ENCODE measurements at regions of chr17 and their contacts with region 1.

Region 1: GRCh38 chr17:40113110-40113906 is 8.5 kb upstream of the MSL1 start:
- DNase-seq: peak; percentile 91 to 92 (median 91)
- H3K4me3 ChIP-seq: peak overlapping the region; percentile 30 to 73 (median 38)
- H3K4me3 Mint-ChIP-seq: peak overlapping the region; percentile 78 to 96
- H3K27ac ChIP-seq: no peak overlapping the region
- H3K27ac Mint-ChIP-seq: peak overlapping the region; percentile 53 to 86 (median 65)
- H3K4me1 ChIP-seq: peaks cover 40 to 52% of the 10 kb centered on the region in 2 donors
- H3K4me1 Mint-ChIP-seq: peaks cover 59% of the 10 kb centered on the region
- H3K27me3 ChIP-seq: no peaks in the 10 kb centered on the region
- H3K27me3 Mint-ChIP-seq: peaks cover 0 to 2% (median 0%) of the 10 kb centered on the region in 3 donors
- CTCF ChIP-seq: peak; percentile 86

Region 2: GRCh38 chr17:40062329-40063186 is 50.8 kb before region 1 on chr17 and contains the start of gene THRA:
- intact Hi-C with region 1: loop called (anchors 2 to 5 kb)
- DNase-seq: peak in 2 of 3 donors; percentile 54
- H3K4me3 ChIP-seq: peak within 1 kb of the TSS; percentile 76 to 94 (median 93)
- H3K4me3 Mint-ChIP-seq: peak within 1 kb of the TSS; percentile 84 to 90
- H3K27ac ChIP-seq: peak within 1 kb of the TSS; percentile 69 to 84
- H3K27ac Mint-ChIP-seq: peak within 1 kb of the TSS; percentile 77 to 92 (median 88)
- H3K4me1 ChIP-seq: peaks cover 26 to 45% of the 10 kb centered on the region in 2 donors
- H3K4me1 Mint-ChIP-seq: peaks cover 49% of the 10 kb centered on the region
- H3K27me3 ChIP-seq: peaks cover 0 to 4% of the 10 kb centered on the region in 2 donors
- H3K27me3 Mint-ChIP-seq: peaks cover 8 to 10% (median 9%) of the 10 kb centered on the region in 3 donors
- CTCF ChIP-seq: peak; percentile 11
- polyA plus RNA-seq, gene THRA: 2.5 to 7.5 (median 3.8) TPM

Region 3: GRCh38 chr17:40098846-40099618 is 14.3 kb before region 1 on chr17:
- intact Hi-C with region 1: loop called in 1 of 2 experiments (anchors 1 kb)
- DNase-seq: peak; percentile 99 to 100 (median 100)
- H3K4me3 ChIP-seq: peak overlapping the region; percentile 35 to 78 (median 36)
- H3K4me3 Mint-ChIP-seq: peak overlapping the region; percentile 87 to 95
- H3K27ac ChIP-seq: peak overlapping the region; percentile 78 to 98
- H3K27ac Mint-ChIP-seq: peak overlapping the region; percentile 96 to 99 (median 98)
- H3K4me1 ChIP-seq: peaks cover 68 to 70% of the 10 kb centered on the region in 2 donors
- H3K4me1 Mint-ChIP-seq: peaks cover 79% of the 10 kb centered on the region
- H3K27me3 ChIP-seq: no peaks in the 10 kb centered on the region
- H3K27me3 Mint-ChIP-seq: peaks cover 0 to 5% (median 0%) of the 10 kb centered on the region in 3 donors
- CTCF ChIP-seq: no peak

Region 4: DNA sequence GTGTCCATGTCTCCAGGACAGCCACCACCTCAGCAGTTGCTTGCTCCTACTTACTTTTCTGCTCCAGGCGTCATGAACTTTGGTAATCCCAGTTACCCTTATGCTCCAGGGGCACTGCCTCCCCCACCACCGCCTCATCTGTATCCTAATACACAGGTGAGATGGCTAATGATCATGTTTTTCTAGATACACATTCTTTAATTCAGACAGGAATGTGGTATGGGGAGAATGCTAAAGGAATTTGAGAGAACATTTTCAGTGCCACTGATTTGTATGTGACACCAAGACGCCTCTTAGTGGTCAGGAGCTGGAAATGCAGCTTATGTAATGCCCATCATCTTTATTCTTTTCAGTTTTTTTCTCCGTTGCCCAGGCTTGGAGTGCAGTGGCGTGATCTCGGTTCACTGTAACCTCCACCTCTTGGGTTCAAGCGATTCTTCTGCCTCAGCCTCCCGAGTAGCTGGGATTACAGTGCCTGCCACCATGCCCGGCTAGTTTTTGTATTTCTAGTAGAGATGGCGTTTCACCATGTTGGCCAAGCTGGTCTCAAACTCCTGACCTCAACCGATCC is 55.0 kb after region 1 on chr17:
- intact Hi-C with region 1: loop called (anchors 2 kb)
- DNase-seq: peak; percentile 44 to 64 (median 62)
- H3K4me3 ChIP-seq: no peak overlapping the region
- H3K4me3 Mint-ChIP-seq: no peak overlapping the region
- H3K27ac ChIP-seq: peak overlapping the region; percentile 21 to 33
- H3K27ac Mint-ChIP-seq: peak overlapping the region in 6 of 7 donors; percentile 46 to 82 (median 80)
- H3K4me1 ChIP-seq: no peaks in the 10 kb centered on the region
- H3K4me1 Mint-ChIP-seq: peaks cover 2% of the 10 kb centered on the region
- H3K27me3 ChIP-seq: no peaks in the 10 kb centered on the region
- H3K27me3 Mint-ChIP-seq: no peaks in the 10 kb centered on the region
- CTCF ChIP-seq: peak; percentile 87

Region 5: GRCh38 chr17:40287494-40288369 is 174.4 kb after region 1 on chr17 and contains the start of gene CDC6:
- intact Hi-C with region 1: loop called in 1 of 2 experiments (anchors 10 kb)
- DNase-seq: peak; percentile 99
- H3K4me3 ChIP-seq: peak within 1 kb of the TSS; percentile 73 to 96 (median 74)
- H3K4me3 Mint-ChIP-seq: peak within 1 kb of the TSS; percentile 96 to 98
- H3K27ac ChIP-seq: no peak within 1 kb of the TSS
- H3K27ac Mint-ChIP-seq: peak within 1 kb of the TSS; percentile 48 to 95 (median 87)
- H3K4me1 ChIP-seq: peaks cover 12 to 15% of the 10 kb centered on the region in 2 donors
- H3K4me1 Mint-ChIP-seq: peaks cover 15% of the 10 kb centered on the region
- H3K27me3 ChIP-seq: no peaks in the 10 kb centered on the region
- H3K27me3 Mint-ChIP-seq: peaks cover 0 to 1% (median 0%) of the 10 kb centered on the region in 3 donors
- CTCF ChIP-seq: no peak
- polyA plus RNA-seq, gene CDC6: 0.11 to 0.21 TPM in 2 of 3 donors, not detected in the other